Calu3 (cell line): ENCODE measurements at regions of chr12 and their contacts with region 1.

Region 1: GRCh38 chr12:32755654-32756475 is at the start of gene YARS2:
- DNase-seq: peak; percentile 91
- H3K4me3 Mint-ChIP-seq: peak within 1 kb of the TSS; percentile 81
- H3K27ac Mint-ChIP-seq: peak within 1 kb of the TSS; percentile 77
- H3K4me1 Mint-ChIP-seq: peaks cover 17% of the 10 kb centered on the region
- H3K27me3 Mint-ChIP-seq: no peaks in the 10 kb centered on the region
- CTCF ChIP-seq: peak; percentile 86
- total RNA-seq, gene YARS2: 22.7 and 28.9 TPM in 2 replicates

Region 2: GRCh38 chr12:32901553-32901952 is 145.7 kb after region 1 on chr12:
- CTCF ChIA-PET with region 1: interaction called, 6 read pairs
- intact Hi-C with region 1: loop called (anchors 5 kb)
- DNase-seq: no peak
- H3K4me3 Mint-ChIP-seq: no peak overlapping the region
- H3K27ac Mint-ChIP-seq: no peak overlapping the region
- H3K4me1 Mint-ChIP-seq: peaks cover 49% of the 10 kb centered on the region
- H3K27me3 Mint-ChIP-seq: no peaks in the 10 kb centered on the region
- CTCF ChIP-seq: no peak

Region 3: GRCh38 chr12:32918890-32919801 is 163.3 kb after region 1 on chr12:
- CTCF ChIA-PET with region 1: interaction called, 10 read pairs
- intact Hi-C with region 1: loop called (anchors 1 kb)
- DNase-seq: no peak
- H3K4me3 Mint-ChIP-seq: peak overlapping the region; percentile 25
- H3K27ac Mint-ChIP-seq: peak overlapping the region; percentile 94
- H3K4me1 Mint-ChIP-seq: peaks cover 34% of the 10 kb centered on the region
- H3K27me3 Mint-ChIP-seq: no peaks in the 10 kb centered on the region
- CTCF ChIP-seq: peak; percentile 20

Region 4: DNA sequence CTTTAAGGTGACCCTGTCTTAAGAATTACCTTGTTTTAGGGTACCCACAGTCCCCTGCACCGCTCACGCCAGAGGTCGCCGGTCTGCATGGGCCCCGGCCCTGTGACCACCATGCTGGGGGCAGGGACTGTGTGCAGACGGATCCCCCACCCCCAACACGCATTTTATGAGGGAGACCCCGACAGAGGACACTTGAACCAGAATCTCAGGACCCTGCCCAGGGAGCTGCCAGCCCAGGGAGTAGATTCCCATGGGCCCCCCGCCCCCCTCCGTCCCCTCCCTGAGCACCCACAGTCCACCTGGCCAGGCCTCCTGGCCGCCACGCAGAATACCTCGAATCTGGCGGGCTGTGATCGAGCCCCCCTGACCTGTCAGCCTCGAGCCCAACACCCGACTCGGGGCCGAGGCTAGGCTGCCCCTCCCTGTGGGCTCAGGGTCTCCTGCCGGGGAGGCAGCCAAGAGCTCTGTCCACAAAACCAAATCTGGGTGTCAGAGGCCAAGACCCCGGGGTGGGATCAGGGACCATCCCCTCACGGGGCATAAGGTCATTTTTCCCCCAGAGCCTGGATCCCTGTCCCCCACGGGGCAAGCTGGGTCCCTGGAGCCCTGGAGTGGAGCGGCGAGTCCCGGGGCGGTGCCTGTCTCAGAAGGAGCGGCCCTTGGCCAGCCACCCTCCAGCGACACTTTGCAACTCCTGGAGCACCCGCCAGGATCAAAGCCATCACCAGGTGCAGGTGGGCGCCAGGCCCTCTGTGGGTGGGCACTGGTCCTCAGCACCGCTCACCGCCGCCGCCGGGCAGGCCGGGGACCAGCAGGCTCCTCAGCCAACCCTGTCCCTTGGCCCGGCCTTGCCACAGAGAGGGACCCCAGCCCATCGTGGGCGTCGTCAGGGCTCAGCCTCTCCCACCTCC is 296.5 kb after region 1 on chr12:
- CTCF ChIA-PET with region 1: no interaction called
- intact Hi-C with region 1: no loop called
- DNase-seq: no peak
- H3K4me3 Mint-ChIP-seq: no peak overlapping the region
- H3K27ac Mint-ChIP-seq: no peak overlapping the region
- H3K4me1 Mint-ChIP-seq: no peaks in the 10 kb centered on the region
- H3K27me3 Mint-ChIP-seq: no peaks in the 10 kb centered on the region
- CTCF ChIP-seq: no peak

Region 5: GRCh38 chr12:33296529-33296928 is 540.7 kb after region 1 on chr12:
- CTCF ChIA-PET with region 1: no interaction called
- intact Hi-C with region 1: loop called (anchors 10 kb)
- DNase-seq: no peak
- H3K4me3 Mint-ChIP-seq: no peak overlapping the region
- H3K27ac Mint-ChIP-seq: no peak overlapping the region
- H3K4me1 Mint-ChIP-seq: peaks cover 16% of the 10 kb centered on the region
- H3K27me3 Mint-ChIP-seq: no peaks in the 10 kb centered on the region
- CTCF ChIP-seq: no peak

Region 6: DNA sequence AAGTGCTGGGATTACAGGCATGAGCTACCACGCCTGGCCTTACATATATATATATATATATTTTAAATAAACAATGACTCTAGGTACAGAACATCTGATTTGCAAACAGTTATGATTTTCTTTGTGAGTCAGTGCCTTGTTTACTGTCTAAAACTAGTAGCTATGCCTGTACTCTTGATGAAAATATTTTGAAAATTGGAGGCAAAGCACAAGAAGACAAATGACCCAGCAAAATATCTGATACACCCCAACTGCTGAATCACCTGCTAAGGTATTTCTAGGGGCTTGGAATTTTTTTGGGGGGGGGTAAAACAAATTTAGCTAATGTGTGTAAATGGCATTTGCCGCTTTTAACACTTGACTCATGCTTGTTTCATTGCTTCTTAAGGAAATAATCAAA is 614.5 kb after region 1 on chr12:
- CTCF ChIA-PET with region 1: no interaction called
- intact Hi-C with region 1: no loop called
- DNase-seq: no peak
- H3K4me3 Mint-ChIP-seq: no peak overlapping the region
- H3K27ac Mint-ChIP-seq: no peak overlapping the region
- H3K4me1 Mint-ChIP-seq: peaks cover 7% of the 10 kb centered on the region
- H3K27me3 Mint-ChIP-seq: no peaks in the 10 kb centered on the region
- CTCF ChIP-seq: no peak

Region 7: DNA sequence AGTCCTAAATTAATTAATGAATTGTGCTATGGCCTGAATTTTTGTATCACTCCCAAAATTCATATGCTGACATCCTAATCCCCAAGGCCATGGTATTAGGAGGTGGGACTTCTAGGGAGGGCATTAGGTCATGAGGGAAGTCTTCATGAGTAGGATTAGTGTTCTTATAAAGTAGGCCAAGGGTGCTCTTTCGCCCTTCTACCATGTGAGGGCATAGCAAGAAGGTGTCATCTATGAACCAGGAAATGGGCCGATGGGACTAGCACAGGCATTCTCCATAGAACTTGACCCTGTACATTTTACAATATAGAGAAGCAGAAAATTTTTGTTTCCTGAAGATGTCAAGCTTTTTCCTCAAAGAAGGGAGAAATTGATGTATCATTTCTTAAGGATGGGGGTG is 671.2 kb after region 1 on chr12:
- CTCF ChIA-PET with region 1: no interaction called
- intact Hi-C with region 1: loop called (anchors 10 kb)
- DNase-seq: peak; percentile 50
- H3K4me3 Mint-ChIP-seq: no peak overlapping the region
- H3K27ac Mint-ChIP-seq: no peak overlapping the region
- H3K4me1 Mint-ChIP-seq: peaks cover 34% of the 10 kb centered on the region
- H3K27me3 Mint-ChIP-seq: no peaks in the 10 kb centered on the region
- CTCF ChIP-seq: peak; percentile 47

Region 8: GRCh38 chr12:34022079-34022830 is 1266.4 kb after region 1 on chr12 and contains the start of gene ALG10:
- CTCF ChIA-PET with region 1: interaction called, 17 read pairs
- intact Hi-C with region 1: loop called (anchors 5 kb)
- DNase-seq: peak; percentile 96
- H3K4me3 Mint-ChIP-seq: peak within 1 kb of the TSS; percentile 88
- H3K27ac Mint-ChIP-seq: peak within 1 kb of the TSS; percentile 90
- H3K4me1 Mint-ChIP-seq: no peaks in the 10 kb centered on the region
- H3K27me3 Mint-ChIP-seq: no peaks in the 10 kb centered on the region
- CTCF ChIP-seq: peak; percentile 42
- total RNA-seq, gene ALG10: 16.4 and 17.4 TPM in 2 replicates